ENCODE measurements at regions of chr13 and their contacts with region 1.

Region 1: GRCh38 chr13:74243637-74244526 is 109.7 kb upstream of the KLF12 start:
- DNase-seq: no peak
- H3K4me3 Mint-ChIP-seq: peak overlapping the region; percentile 60
- H3K27ac Mint-ChIP-seq: peak overlapping the region; percentile 82
- H3K4me1 Mint-ChIP-seq: peaks cover 32% of the 10 kb centered on the region
- H3K27me3 Mint-ChIP-seq: peaks cover 2% of the 10 kb centered on the region

Region 2: GRCh38 chr13:72368031-72368430 is 1875.9 kb before region 1 on chr13:
- intact Hi-C with region 1: no loop called
- DNase-seq: no peak
- H3K4me3 Mint-ChIP-seq: no peak overlapping the region
- H3K27ac Mint-ChIP-seq: no peak overlapping the region
- H3K4me1 Mint-ChIP-seq: no peaks in the 10 kb centered on the region
- H3K27me3 Mint-ChIP-seq: no peaks in the 10 kb centered on the region

Region 3: GRCh38 chr13:73368608-73369007 is 875.3 kb before region 1 on chr13:
- intact Hi-C with region 1: no loop called
- DNase-seq: no peak
- H3K4me3 Mint-ChIP-seq: no peak overlapping the region
- H3K27ac Mint-ChIP-seq: no peak overlapping the region
- H3K4me1 Mint-ChIP-seq: no peaks in the 10 kb centered on the region
- H3K27me3 Mint-ChIP-seq: peaks cover 3% of the 10 kb centered on the region

Region 4: DNA sequence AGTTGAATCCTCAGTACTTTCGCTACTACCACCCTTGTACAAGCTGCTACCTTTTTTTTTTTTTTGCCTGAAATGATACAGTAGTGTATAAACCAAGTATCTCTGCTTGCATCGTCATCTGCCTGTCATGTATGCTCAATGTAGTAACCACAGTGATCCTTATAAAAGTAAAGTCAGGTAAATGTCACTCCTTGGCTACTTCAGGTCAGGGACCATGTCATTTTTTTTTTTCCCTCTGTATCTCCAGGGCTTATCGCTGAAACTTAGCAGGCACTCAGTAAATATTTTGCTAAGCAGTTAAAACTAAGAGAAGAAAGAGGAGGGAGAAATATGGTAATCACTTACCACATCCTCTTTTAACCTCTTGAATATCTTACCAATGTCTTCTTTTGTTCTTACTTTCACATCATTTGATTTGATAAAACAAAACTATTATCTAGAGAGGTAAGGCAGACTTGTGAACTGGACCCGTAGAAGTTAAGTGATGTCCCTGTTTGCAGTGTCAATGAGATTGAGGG is 12.8 kb before region 1 on chr13:
- intact Hi-C with region 1: loop called (anchors 1 kb)
- DNase-seq: no peak
- H3K4me3 Mint-ChIP-seq: peak overlapping the region; percentile 31
- H3K27ac Mint-ChIP-seq: peak overlapping the region; percentile 45
- H3K4me1 Mint-ChIP-seq: peaks cover 21% of the 10 kb centered on the region
- H3K27me3 Mint-ChIP-seq: no peaks in the 10 kb centered on the region